Testis (tissue), 5 donors: ENCODE measurements at regions of chr19 and their contacts with region 1.

Region 1: DNA sequence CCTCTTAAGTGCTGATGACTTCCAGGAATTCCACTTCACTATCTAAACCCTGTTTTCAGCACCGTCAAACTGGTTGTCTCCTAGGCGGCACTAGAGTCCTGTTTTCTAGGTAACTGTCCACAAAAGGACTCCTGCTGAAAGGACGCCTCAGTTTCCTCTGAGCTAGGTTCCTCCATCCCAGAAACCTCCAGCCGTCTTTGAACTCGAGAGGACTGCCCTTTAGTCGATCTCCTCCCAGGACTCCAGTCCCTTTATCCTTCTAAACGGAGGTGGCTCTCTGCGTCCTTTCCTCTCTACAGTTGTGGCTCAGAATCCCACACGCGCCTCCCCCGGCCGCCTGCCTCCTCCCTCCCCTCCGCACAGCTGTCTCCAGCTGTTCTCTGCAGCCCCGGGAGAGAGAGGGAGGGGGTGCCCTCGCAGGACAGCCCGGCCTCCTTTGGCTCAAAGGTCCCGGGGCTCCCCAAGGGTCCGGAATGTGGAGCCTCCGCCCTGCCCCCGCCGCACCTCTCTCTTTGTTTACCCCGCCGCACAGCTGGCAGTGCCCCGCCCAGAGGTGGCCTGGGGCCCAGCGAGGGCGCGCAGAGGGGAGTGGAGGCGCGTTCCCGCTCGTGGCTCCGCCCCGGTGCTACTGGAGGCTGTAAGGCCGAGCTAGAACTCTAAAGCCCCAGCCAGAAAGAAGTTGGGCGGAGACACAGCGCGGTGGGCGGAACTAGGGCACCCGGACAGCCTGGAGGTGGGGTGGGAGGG is 2.4 kb downstream of the LTBP4 start:
- DNase-seq: peak; percentile 97
- H3K4me3 ChIP-seq: peak overlapping the region; percentile 31 to 66
- H3K27ac ChIP-seq: peak overlapping the region; percentile 78 to 82
- H3K4me1 ChIP-seq: peaks cover 54% of the 10 kb centered on the region
- H3K27me3 ChIP-seq: no peaks in the 10 kb centered on the region
- CTCF ChIP-seq: no peak
- POLR2A ChIP-seq: no peak

Region 2: GRCh38 chr19:40530091-40530901 is 73.3 kb before region 1 on chr19:
- intact Hi-C with region 1: loop called (anchors 2 kb)
- DNase-seq: peak; percentile 57
- H3K4me3 ChIP-seq: peak overlapping the region; percentile 49 to 59
- H3K27ac ChIP-seq: peak overlapping the region in 1 of 2 donors; percentile 80
- H3K4me1 ChIP-seq: peaks cover 11% of the 10 kb centered on the region
- H3K27me3 ChIP-seq: no peaks in the 10 kb centered on the region
- CTCF ChIP-seq: peak in 1 of 3 experiments; percentile 49
- POLR2A ChIP-seq: no peak

Region 3: GRCh38 chr19:40639638-40639982 is 36.0 kb after region 1 on chr19:
- intact Hi-C with region 1: loop called (anchors 5 kb)
- DNase-seq: no peak
- H3K4me3 ChIP-seq: no peak overlapping the region
- H3K27ac ChIP-seq: peak overlapping the region in 1 of 2 donors; percentile 41
- H3K4me1 ChIP-seq: peaks cover 23% of the 10 kb centered on the region
- H3K27me3 ChIP-seq: no peaks in the 10 kb centered on the region
- CTCF ChIP-seq: no peak
- POLR2A ChIP-seq: no peak

Region 4: DNA sequence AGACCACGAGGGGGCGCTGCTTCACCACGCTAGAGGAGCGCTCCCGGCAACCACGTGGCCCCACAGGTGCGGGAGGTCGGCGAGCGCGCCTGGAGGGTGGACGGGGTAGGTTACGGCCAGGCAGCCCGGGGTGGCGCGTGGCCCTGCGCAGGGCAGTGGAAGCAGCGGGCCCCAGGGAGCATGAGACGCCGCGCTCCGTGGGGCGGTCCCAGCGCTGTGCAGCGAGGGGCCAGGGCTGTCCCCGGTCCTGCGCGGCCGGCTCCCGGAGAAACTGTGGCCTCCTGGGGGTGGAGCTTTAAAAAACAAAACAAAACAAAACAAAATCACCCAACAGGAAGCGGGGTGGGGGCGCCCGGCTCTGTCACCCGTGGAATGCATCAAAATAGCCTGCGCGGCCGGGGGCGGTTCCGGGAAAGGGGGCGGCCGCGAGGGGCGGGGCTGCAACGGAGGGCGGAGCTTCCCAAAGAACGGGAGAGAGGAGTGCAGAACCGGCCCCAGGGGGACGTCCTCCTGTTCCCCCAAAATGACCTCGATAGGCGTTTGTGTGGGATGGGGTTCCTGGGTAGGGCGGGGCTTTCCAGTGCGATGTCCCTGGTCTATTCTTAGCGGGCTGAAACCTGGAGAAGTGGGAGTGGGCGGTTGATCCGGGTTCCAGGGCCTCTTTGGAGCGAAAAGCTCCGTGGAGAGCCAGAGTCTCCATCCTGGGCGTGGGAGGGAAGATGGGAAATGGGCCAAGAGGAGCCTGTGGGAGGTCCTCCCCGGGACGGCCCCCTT is 59.5 kb after region 1 on chr19:
- intact Hi-C with region 1: no loop called
- DNase-seq: peak; percentile 94
- H3K4me3 ChIP-seq: peak overlapping the region; percentile 51 to 79
- H3K27ac ChIP-seq: peak overlapping the region; percentile 81 to 84
- H3K4me1 ChIP-seq: peaks cover 9% of the 10 kb centered on the region
- H3K27me3 ChIP-seq: no peaks in the 10 kb centered on the region
- CTCF ChIP-seq: peak; percentile 98 to 99 (median 99)
- POLR2A ChIP-seq: no peak